ENCODE measurements at regions of chr16 and their contacts with region 1.

Region 1: GRCh38 chr16:30526823-30527635 is 663 bp upstream of the ZNF768 start:
- DNase-seq: peak; percentile 57 to 95 (median 86)
- ATAC-seq: peak; percentile 71
- H3K4me3 ChIP-seq: peak overlapping the region; percentile 83
- H3K4me3 Mint-ChIP-seq: peak overlapping the region; percentile 88
- H3K27ac ChIP-seq: peak overlapping the region; percentile 76 to 81
- H3K27ac Mint-ChIP-seq: peak overlapping the region; percentile 81
- H3K4me1 ChIP-seq: peaks cover 49% of the 10 kb centered on the region
- H3K4me1 Mint-ChIP-seq: peaks cover 26% of the 10 kb centered on the region
- H3K27me3 ChIP-seq: no peaks in the 10 kb centered on the region
- H3K27me3 Mint-ChIP-seq: no peaks in the 10 kb centered on the region
- CTCF ChIP-seq: peak; percentile 18

Region 2: DNA sequence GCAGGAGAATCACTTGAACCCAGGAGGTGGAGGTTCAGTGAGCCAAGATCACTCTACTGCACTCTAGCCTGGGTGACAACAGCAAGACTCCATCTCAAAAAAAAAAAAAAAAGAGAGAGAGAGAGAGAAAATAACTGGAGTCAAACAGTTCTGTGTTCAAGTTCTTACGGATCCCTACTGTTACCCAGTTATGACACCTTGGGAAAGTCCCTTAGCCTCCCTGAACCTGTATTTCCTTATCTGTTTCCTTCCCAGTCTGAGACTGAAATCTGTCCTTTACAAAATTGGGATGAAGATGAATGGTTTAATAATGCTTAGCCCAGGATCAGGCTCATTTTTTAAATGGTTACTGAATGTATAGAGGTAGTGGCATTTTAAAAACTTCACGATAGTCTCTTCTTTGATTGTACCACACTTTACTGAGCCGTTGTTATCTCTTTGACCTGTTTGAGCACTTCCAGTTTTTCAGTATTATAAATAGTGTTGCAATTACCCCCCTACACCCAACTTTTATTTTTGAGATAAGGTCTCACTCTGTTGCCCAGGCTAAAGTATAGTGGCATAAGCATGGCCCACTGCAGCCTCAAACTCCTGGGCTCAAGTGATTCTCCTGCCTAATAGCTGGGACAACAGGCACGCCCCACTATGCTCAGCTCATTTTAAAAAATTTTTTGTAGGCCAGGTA is 17.8 kb before region 1 on chr16:
- CTCF ChIA-PET with region 1: no interaction called
- POLR2A ChIA-PET with region 1: no interaction called
- intact Hi-C with region 1: no loop called
- DNase-seq: no peak
- ATAC-seq: no peak
- H3K4me3 ChIP-seq: no peak overlapping the region
- H3K4me3 Mint-ChIP-seq: no peak overlapping the region
- H3K27ac ChIP-seq: no peak overlapping the region
- H3K27ac Mint-ChIP-seq: peak overlapping the region; percentile 56
- H3K4me1 ChIP-seq: peaks cover 5% of the 10 kb centered on the region
- H3K4me1 Mint-ChIP-seq: peaks cover 5% of the 10 kb centered on the region
- H3K27me3 ChIP-seq: no peaks in the 10 kb centered on the region
- H3K27me3 Mint-ChIP-seq: no peaks in the 10 kb centered on the region
- CTCF ChIP-seq: no peak

Region 3: DNA sequence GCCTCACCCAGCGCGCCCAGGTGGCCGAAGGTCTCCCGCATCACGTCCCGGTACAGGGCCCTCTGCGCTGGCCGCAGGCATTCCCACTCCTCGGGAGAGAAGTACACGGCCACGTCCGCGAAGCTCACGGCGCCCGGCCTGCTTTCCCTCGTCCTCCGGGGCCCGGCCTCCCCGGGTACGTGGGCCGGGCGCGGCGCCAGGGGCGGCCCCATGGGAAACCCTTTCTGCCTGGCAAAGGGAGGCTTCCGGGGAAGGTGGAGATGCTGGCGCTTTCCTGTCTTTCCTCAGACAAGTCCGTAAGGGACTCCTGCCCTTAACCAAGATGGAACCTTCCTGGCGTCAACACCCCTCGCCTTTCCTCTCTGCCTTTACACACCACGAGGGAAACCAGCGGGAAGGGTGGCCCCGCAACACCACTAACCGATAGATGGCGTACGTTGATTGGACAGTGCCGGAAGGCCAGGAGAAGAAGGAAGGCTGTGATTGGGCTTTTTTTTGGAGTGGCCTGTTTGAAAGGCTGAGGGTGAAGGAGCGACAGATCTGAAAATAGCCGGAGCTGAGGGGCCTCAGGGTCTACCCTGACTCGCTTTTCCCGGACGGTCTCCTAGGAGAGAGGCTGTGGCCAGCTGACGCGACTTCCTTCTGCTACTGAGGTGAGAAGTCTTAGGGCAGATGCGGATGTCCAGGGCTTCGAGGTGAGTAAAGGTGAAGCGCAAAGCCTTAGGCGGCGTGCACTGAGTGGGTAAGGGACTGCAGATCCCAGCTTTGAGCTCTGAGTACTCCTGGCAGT is 58.6 kb after region 1 on chr16 and contains the start of gene ZNF785:
- CTCF ChIA-PET with region 1: interaction called, 4 read pairs
- POLR2A ChIA-PET with region 1: no interaction called
- intact Hi-C with region 1: loop called in 1 of 2 experiments (anchors 1 kb)
- DNase-seq: peak; percentile 81 to 97 (median 87)
- ATAC-seq: peak; percentile 99
- H3K4me3 ChIP-seq: peak within 1 kb of the TSS; percentile 64
- H3K4me3 Mint-ChIP-seq: peak within 1 kb of the TSS; percentile 92
- H3K27ac ChIP-seq: peak within 1 kb of the TSS; percentile 53 to 57
- H3K27ac Mint-ChIP-seq: peak within 1 kb of the TSS; percentile 93
- H3K4me1 ChIP-seq: peaks cover 26% of the 10 kb centered on the region
- H3K4me1 Mint-ChIP-seq: peaks cover 18% of the 10 kb centered on the region
- H3K27me3 ChIP-seq: no peaks in the 10 kb centered on the region
- H3K27me3 Mint-ChIP-seq: no peaks in the 10 kb centered on the region
- CTCF ChIP-seq: no peak
- total RNA-seq, gene ZNF785: 6.6 to 7.7 TPM

Measured in CD4-positive, alpha-beta T cell (primary cell).